Activated CD4-positive, alpha-beta memory T cell treated with anti-CD3 and anti-CD28 coated beads, Interleukin-2, amount 10 ng/mL, durations not matched to agents 7 days and 5 days (primary cell): ENCODE measurements at regions of chr13 and their contacts with region 1.

Region 1: DNA sequence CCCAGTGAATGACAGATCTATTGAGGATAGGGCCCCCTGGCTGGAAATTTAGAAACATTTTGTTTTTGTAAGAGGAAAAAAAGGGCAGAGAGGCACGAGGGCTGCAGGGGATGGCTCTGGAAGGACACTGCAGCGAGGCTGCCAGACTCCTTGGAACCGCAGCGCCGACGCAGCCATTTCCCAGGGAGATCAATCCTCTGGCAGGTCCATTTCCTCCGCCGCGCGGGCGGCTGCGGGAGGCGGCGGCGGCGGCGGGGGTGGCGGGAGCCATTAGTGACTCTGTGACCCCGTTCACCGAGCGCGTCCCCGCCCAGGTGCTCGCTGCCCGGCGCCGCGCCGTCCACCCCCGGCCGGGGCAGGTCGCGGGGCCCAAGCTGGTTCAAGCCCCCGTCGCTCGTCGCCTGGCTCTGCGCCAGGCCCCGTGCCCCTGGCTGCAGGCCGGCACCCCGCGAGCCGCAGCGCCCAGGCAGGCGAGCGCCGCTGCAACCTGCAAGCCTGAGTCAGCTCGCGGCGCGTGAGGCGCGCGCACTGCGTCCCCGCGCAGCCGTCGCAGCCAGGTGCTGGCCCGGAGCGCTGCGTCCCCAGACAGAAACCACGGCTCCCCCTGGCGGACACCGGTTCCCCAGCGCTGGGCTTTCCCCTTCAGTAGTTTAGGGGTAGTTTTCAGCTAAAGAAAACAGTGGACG is 192.6 kb downstream of the KATNAL1 start:
- DNase-seq: peak; percentile 94
- H3K4me3 Mint-ChIP-seq: peak overlapping the region; percentile 74
- H3K27ac Mint-ChIP-seq: no peak overlapping the region
- H3K4me1 Mint-ChIP-seq: peaks cover 42% of the 10 kb centered on the region
- H3K27me3 Mint-ChIP-seq: peaks cover 8% of the 10 kb centered on the region

Region 2: GRCh38 chr13:29782798-29783197 is 331.9 kb before region 1 on chr13:
- CTCF ChIA-PET with region 1: interaction called, 18 read pairs
- POLR2A ChIA-PET with region 1: no interaction called
- DNase-seq: no peak
- H3K4me3 Mint-ChIP-seq: no peak overlapping the region
- H3K27ac Mint-ChIP-seq: no peak overlapping the region
- H3K4me1 Mint-ChIP-seq: peaks cover 8% of the 10 kb centered on the region
- H3K27me3 Mint-ChIP-seq: no peaks in the 10 kb centered on the region

Region 3: GRCh38 chr13:29850224-29850898 is 264.4 kb before region 1 on chr13 and contains the start of gene UBL3:
- CTCF ChIA-PET with region 1: interaction called, 167 read pairs
- POLR2A ChIA-PET with region 1: interaction called, 24 read pairs
- DNase-seq: peak; percentile 95
- H3K4me3 Mint-ChIP-seq: peak within 1 kb of the TSS; percentile 96
- H3K27ac Mint-ChIP-seq: peak within 1 kb of the TSS; percentile 95
- H3K4me1 Mint-ChIP-seq: peaks cover 37% of the 10 kb centered on the region
- H3K27me3 Mint-ChIP-seq: no peaks in the 10 kb centered on the region
- total RNA-seq, gene UBL3: 17.3 to 17.8 TPM

Region 4: GRCh38 chr13:29935309-29935981 is 179.3 kb before region 1 on chr13:
- CTCF ChIA-PET with region 1: interaction called, 118 read pairs
- POLR2A ChIA-PET with region 1: interaction called, 31 read pairs
- DNase-seq: peak; percentile 91
- H3K4me3 Mint-ChIP-seq: peak overlapping the region; percentile 86
- H3K27ac Mint-ChIP-seq: peak overlapping the region; percentile 95
- H3K4me1 Mint-ChIP-seq: peaks cover 56% of the 10 kb centered on the region
- H3K27me3 Mint-ChIP-seq: no peaks in the 10 kb centered on the region

Region 5: DNA sequence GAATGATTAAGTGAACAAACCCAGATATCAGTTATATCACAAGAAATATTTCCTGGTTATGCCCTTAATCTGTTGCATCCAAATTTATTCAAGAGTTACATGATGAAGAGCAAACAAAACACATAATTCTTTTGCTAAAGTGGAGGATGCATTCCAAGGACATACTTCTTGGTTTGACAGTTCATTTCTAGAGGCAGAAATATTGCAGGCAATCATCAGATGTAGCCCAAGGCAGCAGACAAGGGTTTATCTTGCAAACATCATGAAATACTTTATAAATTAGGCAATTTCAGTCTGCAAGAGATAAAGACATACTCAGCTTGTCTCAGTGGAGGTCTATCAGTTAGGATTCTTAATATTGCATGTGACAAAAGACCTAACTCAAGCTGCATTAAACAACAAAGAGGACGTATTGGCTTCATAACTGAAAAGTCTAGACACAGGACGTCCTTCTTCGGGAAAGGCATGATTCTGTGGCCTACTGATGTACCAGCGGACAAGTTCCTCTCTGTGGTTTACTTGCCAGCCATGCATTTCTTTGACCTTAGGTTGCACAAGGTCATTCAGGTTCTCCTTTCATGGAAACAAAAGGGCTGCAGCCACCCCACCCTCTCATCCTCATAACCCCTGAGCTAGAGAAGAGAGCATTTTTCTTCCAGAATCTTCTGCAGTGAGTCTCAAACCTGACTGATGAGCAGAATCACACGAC is 11.4 kb before region 1 on chr13:
- CTCF ChIA-PET with region 1: interaction called, 15 read pairs
- POLR2A ChIA-PET with region 1: no interaction called
- DNase-seq: no peak
- H3K4me3 Mint-ChIP-seq: no peak overlapping the region
- H3K27ac Mint-ChIP-seq: no peak overlapping the region
- H3K4me1 Mint-ChIP-seq: no peaks in the 10 kb centered on the region
- H3K27me3 Mint-ChIP-seq: peaks cover 15% of the 10 kb centered on the region

Region 6: DNA sequence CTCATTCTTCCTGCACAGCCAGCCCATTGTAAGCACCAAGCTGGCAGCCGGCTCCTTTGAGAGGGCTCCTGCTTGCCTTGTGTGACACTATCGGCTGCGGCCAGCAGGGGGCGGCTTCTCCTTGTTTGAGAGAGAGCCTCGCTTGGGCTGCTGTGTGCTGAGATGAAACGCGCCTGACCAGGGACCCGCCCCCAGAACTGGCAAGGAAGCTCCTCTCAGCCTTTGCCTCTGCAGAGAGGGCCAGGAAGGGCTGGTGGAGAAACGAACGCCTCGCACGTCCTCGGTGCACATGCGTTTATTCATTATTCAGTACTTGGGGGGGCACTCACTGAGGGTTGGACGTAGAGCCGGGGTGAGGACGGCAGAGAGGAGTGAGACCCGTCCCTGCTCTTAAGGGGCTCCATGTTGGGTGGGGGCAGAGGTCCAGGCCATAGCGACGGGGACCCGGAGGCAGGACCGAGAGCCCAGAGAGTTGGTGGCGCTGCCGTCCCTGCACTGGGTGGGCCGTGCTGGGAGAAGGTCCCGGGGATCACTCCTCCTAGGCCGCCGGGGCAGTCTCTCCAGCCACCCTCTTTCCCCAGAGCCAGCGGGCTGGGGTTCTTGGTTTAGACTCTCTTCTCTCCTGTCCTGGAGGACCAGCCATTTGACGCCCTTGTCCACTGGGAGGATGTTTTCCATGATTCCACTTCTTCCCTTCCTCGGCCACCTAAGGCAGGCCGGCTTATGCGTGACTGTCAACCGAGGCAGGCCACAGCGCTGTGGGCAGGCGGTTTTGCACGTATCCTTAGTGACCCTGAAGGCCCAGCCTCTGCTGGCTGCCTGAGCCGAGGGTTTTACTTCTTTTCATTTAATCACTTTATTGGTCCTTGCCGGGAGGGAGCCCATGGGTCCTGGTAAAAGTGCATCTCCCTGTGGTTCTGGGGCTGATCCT is 18.2 kb after region 1 on chr13:
- CTCF ChIA-PET with region 1: interaction called, 65 read pairs
- POLR2A ChIA-PET with region 1: interaction called, 5 read pairs
- DNase-seq: peak; percentile 98
- H3K4me3 Mint-ChIP-seq: no peak overlapping the region
- H3K27ac Mint-ChIP-seq: peak overlapping the region; percentile 21
- H3K4me1 Mint-ChIP-seq: peaks cover 11% of the 10 kb centered on the region
- H3K27me3 Mint-ChIP-seq: no peaks in the 10 kb centered on the region

Region 7: DNA sequence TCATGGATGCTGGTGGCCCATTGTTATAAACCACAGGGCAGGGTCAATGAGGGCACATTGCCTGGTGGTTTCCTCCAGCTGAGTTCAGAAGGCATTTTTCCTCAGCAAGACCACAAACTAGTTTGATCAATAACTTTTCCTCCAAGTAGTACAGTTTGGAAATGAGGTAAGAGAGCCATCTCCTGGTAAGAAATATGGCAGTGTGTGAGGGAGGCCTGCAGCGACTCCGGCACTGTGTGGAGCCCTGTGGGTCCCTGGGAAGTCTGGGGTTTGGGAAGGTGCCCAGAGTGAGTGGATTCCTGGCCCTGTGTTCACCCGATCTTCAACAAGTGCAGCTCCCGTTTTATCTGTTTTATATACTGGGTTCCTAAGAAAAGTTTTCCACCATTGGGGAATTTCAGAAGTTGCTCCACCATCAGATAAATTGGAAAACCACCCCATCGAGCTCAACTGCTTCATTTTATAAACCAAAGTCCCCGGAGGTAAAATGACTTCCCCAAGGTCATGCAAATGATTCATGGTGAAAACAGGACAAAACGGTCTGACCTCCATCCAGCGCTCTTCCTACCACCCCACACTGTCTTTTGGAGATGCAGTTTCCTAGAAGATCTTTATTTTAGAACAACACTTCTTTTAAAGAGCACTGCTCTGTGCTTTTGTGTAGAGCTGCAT is 44.2 kb after region 1 on chr13:
- CTCF ChIA-PET with region 1: interaction called, 26 read pairs
- POLR2A ChIA-PET with region 1: interaction called, 3 read pairs
- DNase-seq: peak; percentile 36
- H3K4me3 Mint-ChIP-seq: no peak overlapping the region
- H3K27ac Mint-ChIP-seq: no peak overlapping the region
- H3K4me1 Mint-ChIP-seq: peaks cover 54% of the 10 kb centered on the region
- H3K27me3 Mint-ChIP-seq: peaks cover 2% of the 10 kb centered on the region